K562 (cell line): ENCODE measurements at regions of chr10 and their contacts with region 1.

Region 1: GRCh38 chr10:101453791-101454718 is 100.1 kb downstream of the BTRC start:
- DNase-seq: peak in 2 of 4 experiments; percentile 20 to 39
- ATAC-seq: peak; percentile 35
- H3K4me3 ChIP-seq: no peak overlapping the region
- H3K27ac ChIP-seq: peak overlapping the region; percentile 51; the same call in 2 of the 3 replicates
- H3K4me1 ChIP-seq: peaks cover 4 to 40% of the 10 kb centered on the region in 2 experiments; a peak in 4 of 5 replicates
- H3K27me3 ChIP-seq: no peaks in the 10 kb centered on the region
- CTCF ChIP-seq: no peak
- EP300 ChIP-seq: peak; percentile 43; the same call in 1 of the 2 replicates
- POLR2A ChIP-seq: no peak
- RAD21 ChIP-seq: no peak

Region 2: GRCh38 chr10:101258179-101258885 is 195.7 kb before region 1 on chr10:
- CTCF ChIA-PET with region 1: no interaction called
- POLR2A ChIA-PET with region 1: no interaction called
- in situ Hi-C with region 1: no loop called
- intact Hi-C with region 1: no loop called
- DNase-seq: peak; percentile 43 to 60 (median 56)
- ATAC-seq: peak; percentile 86
- H3K4me3 ChIP-seq: no peak overlapping the region
- H3K27ac ChIP-seq: no peak overlapping the region
- H3K4me1 ChIP-seq: peaks cover 8% of the 10 kb centered on the region in 2 experiments; a peak in 2 of 5 replicates
- H3K27me3 ChIP-seq: peaks cover 0 to 20% of the 10 kb centered on the region in 2 experiments; a peak in 3 of 5 replicates
- CTCF ChIP-seq: no peak
- EP300 ChIP-seq: no peak
- POLR2A ChIP-seq: no peak
- RAD21 ChIP-seq: no peak

Region 3: DNA sequence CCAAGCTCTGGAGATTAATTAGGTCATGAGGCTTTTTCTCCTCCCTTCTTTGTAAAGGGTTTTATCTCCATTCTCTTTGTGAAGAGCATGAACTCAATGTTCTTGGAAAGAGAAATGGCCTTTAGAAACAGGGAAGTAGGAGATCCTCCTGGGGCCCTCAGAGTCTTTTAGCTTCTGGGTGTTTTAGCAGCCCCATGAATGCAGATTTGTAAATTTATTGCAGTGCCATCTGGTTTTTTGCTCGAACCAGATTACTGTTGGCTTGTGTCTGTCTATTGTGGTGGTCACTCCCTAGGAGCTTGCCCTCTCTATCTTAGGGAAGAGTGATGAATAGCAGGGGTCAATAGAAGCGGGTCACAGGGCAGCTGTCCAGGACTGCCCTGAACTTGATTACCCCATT is 10.5 kb after region 1 on chr10:
- CTCF ChIA-PET with region 1: no interaction called
- POLR2A ChIA-PET with region 1: interaction called, 10 read pairs
- in situ Hi-C with region 1: no loop called
- intact Hi-C with region 1: no loop called
- DNase-seq: no peak
- ATAC-seq: no peak
- H3K4me3 ChIP-seq: no peak overlapping the region
- H3K27ac ChIP-seq: no peak overlapping the region
- H3K4me1 ChIP-seq: peaks cover 0 to 2% of the 10 kb centered on the region in 2 experiments; a peak in 2 of 5 replicates
- H3K27me3 ChIP-seq: no peaks in the 10 kb centered on the region
- CTCF ChIP-seq: no peak
- EP300 ChIP-seq: no peak
- POLR2A ChIP-seq: no peak
- RAD21 ChIP-seq: no peak